ENCODE measurements at regions of chr17 and their contacts with region 1.

Region 1: GRCh38 chr17:42221937-42222745 is 27.8 kb upstream of the GHDC start:
- DNase-seq: peak; percentile 64
- H3K4me3 Mint-ChIP-seq: no peak overlapping the region
- H3K27ac Mint-ChIP-seq: peak overlapping the region; percentile 37
- H3K4me1 Mint-ChIP-seq: no peaks in the 10 kb centered on the region
- H3K27me3 Mint-ChIP-seq: no peaks in the 10 kb centered on the region

Region 2: DNA sequence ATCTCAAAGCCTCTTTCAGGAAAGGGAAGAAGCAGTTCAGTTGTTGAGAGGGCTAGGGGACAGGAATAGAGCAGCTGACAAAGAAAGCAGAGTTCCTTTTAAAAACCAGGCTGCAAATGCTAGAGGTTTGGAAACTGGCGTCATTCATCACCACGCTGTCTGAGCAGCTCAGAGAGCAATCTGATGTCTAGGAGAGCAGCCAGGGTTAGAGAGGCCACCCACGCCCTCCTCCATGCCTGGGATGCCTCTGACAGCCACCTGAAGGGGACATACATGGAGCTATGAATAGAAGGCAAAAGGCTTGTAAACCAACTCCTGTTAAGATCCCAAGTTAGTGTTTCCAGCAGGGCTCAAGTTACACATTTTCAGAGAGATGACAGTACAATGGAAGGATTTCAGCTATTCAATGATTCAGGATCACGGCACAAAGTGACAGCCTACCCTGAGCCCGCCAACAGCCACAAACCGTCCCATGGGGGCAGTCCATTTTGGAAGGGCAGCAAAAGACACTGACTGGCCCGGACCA is 79.7 kb before region 1 on chr17:
- CTCF ChIA-PET with region 1: no interaction called
- POLR2A ChIA-PET with region 1: no interaction called
- DNase-seq: no peak
- H3K4me3 Mint-ChIP-seq: no peak overlapping the region
- H3K27ac Mint-ChIP-seq: no peak overlapping the region
- H3K4me1 Mint-ChIP-seq: peaks cover 6% of the 10 kb centered on the region
- H3K27me3 Mint-ChIP-seq: no peaks in the 10 kb centered on the region

Region 3: DNA sequence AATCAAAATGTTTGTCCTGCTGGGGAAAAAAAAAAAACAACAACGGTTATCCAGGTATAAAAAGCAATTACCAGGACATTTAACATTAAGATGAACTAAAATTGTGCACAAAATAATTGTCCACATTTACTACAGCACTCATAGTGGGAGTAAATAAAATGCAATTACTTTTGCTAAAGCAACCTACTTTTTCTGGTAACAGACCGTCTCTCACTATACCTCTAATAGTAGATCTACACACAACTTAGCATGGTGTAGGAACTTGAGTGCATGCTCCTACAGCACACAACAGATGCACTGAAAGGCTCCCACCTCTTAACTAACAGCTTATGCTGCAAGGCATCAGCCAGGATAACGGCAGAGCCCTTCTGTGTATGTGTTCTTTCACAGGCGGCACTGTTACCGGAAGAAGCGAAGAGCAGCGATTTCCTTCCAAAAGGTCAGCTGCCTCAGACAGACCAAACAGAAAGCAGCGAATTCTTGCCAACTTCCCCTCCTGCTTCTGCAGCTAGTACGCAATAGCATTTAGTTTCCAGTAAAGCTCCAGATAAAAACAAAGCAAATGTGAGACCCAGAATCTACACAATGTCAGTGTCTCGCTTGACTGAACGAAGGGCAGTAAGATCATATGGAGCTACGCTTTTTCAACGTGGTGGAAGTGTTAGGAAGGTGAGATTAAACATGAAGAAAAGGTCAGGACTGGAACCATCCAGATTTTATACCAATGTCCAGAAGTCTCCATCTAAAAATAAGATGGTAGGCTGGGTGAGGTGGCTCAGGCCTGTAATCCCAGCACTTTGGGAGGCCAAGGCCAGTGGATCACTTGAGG is 26.4 kb after region 1 on chr17:
- CTCF ChIA-PET with region 1: interaction called, 14 read pairs
- POLR2A ChIA-PET with region 1: interaction called, 30 read pairs
- DNase-seq: peak; percentile 84
- H3K4me3 Mint-ChIP-seq: peak overlapping the region; percentile 77
- H3K27ac Mint-ChIP-seq: peak overlapping the region; percentile 91
- H3K4me1 Mint-ChIP-seq: peaks cover 68% of the 10 kb centered on the region
- H3K27me3 Mint-ChIP-seq: no peaks in the 10 kb centered on the region

Region 4: DNA sequence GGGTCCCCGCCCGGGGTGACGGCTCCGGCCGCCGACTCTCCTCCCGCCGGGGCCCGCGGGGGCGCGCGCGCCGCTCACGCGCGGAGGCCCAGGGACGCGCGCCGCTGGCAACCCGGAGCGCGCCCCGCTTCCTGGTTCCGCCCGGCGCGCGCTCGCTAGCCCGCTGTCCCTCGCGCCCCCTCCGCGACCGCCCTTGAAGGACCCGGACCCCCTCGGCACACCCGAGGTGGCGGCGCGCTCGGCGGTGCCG is 54.1 kb after region 1 on chr17 and contains the start of gene STAT5B:
- CTCF ChIA-PET with region 1: interaction called, 17 read pairs
- POLR2A ChIA-PET with region 1: interaction called, 8 read pairs
- DNase-seq: peak; percentile 79
- H3K4me3 Mint-ChIP-seq: peak within 1 kb of the TSS; percentile 88
- H3K27ac Mint-ChIP-seq: peak within 1 kb of the TSS; percentile 83
- H3K4me1 Mint-ChIP-seq: peaks cover 41% of the 10 kb centered on the region
- H3K27me3 Mint-ChIP-seq: no peaks in the 10 kb centered on the region
- total RNA-seq, gene STAT5B: 163 to 171 TPM

Region 5: DNA sequence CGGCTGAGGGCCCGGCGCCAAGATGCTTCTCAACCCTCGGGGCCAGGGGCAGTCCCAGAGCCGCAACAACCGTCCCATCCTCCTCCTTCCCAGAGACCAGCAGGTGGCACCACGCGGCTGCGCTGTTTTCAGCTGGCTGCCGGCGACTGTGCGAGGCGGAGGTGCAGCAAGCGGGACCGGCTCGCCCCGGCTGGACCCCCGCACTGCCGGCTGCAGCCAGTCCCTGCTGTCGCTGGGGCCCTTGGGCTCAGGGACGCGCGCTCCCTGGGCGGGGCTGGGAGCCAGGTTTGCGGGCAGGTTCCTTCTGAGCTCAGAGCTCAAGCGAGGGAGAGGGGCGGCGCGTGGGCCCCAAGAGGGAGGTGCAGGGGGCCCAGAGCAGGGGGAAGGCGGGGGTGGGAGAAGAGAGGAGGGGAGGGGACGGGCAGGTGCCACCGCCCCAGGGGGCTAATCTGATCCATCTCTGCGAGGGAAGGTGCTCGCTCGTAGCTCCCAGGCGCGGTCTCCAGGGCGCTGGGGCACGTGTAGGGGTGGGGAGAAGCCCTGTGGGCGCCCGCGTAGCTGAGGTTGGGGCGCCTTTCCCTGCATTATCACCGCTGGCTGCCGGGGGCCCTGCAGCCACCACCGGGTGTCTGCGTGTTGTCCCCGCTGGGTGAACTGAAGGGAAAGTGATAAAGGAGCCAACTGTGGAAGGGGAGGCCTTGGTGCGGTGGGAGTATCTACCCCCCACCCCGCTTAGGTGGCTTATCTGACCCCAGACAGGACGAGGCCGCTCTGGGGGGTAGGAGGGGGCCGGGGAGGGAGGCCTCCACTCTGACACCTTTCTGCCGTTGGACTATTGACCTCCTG is 90.4 kb after region 1 on chr17:
- CTCF ChIA-PET with region 1: interaction called, 45 read pairs
- POLR2A ChIA-PET with region 1: interaction called, 6 read pairs
- DNase-seq: peak; percentile 80
- H3K4me3 Mint-ChIP-seq: no peak overlapping the region
- H3K27ac Mint-ChIP-seq: peak overlapping the region; percentile 6
- H3K4me1 Mint-ChIP-seq: peaks cover 59% of the 10 kb centered on the region
- H3K27me3 Mint-ChIP-seq: no peaks in the 10 kb centered on the region

Measured in activated CD4-positive, alpha-beta memory T cell treated with anti-CD3 and anti-CD28 coated beads, Interleukin-2, amount 10 ng/mL, durations not matched to agents 7 days and 5 days (primary cell).